Activated CD4-positive, alpha-beta memory T cell treated with anti-CD3 and anti-CD28 coated beads, Interleukin-2, amount 10 ng/mL, durations not matched to agents 7 days and 5 days (primary cell): ENCODE measurements at regions of chr2 and their contacts with region 1.

Region 1: GRCh38 chr2:25362049-25362433 is 20.3 kb upstream of the DNMT3A start:
- DNase-seq: peak; percentile 96
- H3K4me3 Mint-ChIP-seq: peak overlapping the region; percentile 83
- H3K27ac Mint-ChIP-seq: peak overlapping the region; percentile 82
- H3K4me1 Mint-ChIP-seq: peaks cover 22% of the 10 kb centered on the region
- H3K27me3 Mint-ChIP-seq: no peaks in the 10 kb centered on the region

Region 2: DNA sequence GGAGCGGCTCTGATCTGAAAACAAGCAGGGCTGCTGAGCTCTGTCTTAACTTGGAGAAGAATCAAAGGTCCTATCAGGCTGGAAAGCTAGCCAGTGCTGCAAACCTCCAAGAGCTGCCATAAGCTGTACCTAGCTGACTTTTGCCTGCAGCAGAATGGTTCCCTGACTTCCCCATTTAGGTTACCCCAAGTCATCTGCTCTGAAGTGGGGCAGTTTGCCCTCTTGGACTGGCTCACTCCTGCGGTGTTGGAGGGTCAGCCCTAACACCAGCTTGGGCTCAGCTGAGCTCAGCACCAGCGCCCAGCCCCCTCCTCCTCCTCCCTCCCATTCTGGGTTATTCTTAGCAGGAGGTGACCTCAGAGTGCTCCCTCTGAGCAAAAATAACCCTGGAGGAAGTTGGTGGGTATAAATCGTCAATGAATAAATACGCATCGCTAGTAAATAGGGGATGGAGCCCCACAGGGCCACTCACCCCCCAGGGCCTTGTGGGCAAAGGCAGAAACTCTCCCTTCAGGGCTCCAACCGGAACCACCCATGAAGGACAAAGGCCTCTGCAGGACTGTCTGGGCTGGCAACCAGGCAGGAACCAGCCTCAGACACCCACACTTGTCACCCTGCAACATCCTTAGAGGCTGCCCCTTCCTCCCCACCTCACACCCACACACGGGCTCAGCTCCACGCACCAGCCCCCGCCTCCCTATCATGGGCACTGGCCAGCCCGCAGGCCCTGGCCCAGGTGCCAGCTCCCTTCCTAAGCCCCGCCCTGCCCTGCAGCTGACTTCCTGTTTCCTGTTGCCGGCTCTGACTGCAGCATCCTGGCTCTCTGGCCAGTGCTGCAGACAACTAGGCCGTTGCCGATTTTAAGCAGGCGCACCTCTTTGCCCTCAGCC is 67.2 kb before region 1 on chr2:
- CTCF ChIA-PET with region 1: interaction called, 13 read pairs
- POLR2A ChIA-PET with region 1: interaction called, 13 read pairs
- DNase-seq: peak; percentile 90
- H3K4me3 Mint-ChIP-seq: peak overlapping the region; percentile 62
- H3K27ac Mint-ChIP-seq: peak overlapping the region; percentile 94
- H3K4me1 Mint-ChIP-seq: peaks cover 38% of the 10 kb centered on the region
- H3K27me3 Mint-ChIP-seq: no peaks in the 10 kb centered on the region

Region 3: GRCh38 chr2:25332571-25332970 is 29.5 kb before region 1 on chr2:
- CTCF ChIA-PET with region 1: interaction called, 12 read pairs
- POLR2A ChIA-PET with region 1: interaction called, 6 read pairs
- DNase-seq: no peak
- H3K4me3 Mint-ChIP-seq: no peak overlapping the region
- H3K27ac Mint-ChIP-seq: no peak overlapping the region
- H3K4me1 Mint-ChIP-seq: peaks cover 42% of the 10 kb centered on the region
- H3K27me3 Mint-ChIP-seq: no peaks in the 10 kb centered on the region

Region 4: DNA sequence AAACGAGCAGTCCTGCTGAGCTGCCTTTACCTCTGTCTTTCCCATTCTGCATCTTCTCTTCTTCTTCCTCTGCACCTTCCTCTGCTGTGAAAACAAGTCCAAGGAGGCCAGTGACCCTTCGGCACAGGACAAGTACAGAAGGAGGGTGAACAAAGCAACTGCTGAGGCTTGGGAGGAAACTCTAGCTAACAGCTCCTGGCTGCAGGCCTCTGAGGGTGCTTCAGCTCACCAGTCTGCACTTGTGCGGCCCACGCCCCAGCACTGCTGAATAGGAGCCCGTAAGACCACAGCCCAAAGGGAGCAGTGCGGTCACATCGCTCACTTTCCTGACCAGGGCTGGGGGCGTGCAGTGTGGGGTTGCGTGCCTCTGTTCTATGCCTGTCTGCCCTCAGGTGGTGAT is 21.8 kb after region 1 on chr2:
- CTCF ChIA-PET with region 1: interaction called, 131 read pairs
- POLR2A ChIA-PET with region 1: interaction called, 4 read pairs
- DNase-seq: no peak
- H3K4me3 Mint-ChIP-seq: no peak overlapping the region
- H3K27ac Mint-ChIP-seq: no peak overlapping the region
- H3K4me1 Mint-ChIP-seq: peaks cover 26% of the 10 kb centered on the region
- H3K27me3 Mint-ChIP-seq: no peaks in the 10 kb centered on the region

Region 5: DNA sequence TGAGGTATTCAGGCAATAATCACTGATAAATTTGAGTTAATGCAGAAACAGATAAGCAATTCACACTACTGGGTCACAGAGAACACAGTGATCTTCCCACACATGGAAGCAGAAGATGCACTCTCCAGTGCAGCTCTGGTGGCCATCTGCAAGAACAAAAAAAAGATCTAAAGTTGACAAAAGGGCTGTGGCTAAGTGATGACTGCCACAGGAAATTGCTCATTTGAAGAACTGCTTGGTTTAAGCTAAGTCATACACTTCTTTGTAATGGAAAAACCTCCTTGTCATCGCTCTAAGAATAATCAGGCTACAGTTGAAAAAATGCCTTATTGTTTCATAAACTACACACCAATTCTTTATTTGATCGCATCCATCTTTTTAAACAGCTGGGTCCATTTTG is 196.2 kb after region 1 on chr2:
- CTCF ChIA-PET with region 1: interaction called, 9 read pairs
- POLR2A ChIA-PET with region 1: interaction called, 10 read pairs
- DNase-seq: peak; percentile 61
- H3K4me3 Mint-ChIP-seq: no peak overlapping the region
- H3K27ac Mint-ChIP-seq: peak overlapping the region; percentile 95
- H3K4me1 Mint-ChIP-seq: peaks cover 53% of the 10 kb centered on the region
- H3K27me3 Mint-ChIP-seq: no peaks in the 10 kb centered on the region